CD4-positive, alpha-beta memory T cell (primary cell): ENCODE measurements at regions of chrX and their contacts with region 1.

Region 1: DNA sequence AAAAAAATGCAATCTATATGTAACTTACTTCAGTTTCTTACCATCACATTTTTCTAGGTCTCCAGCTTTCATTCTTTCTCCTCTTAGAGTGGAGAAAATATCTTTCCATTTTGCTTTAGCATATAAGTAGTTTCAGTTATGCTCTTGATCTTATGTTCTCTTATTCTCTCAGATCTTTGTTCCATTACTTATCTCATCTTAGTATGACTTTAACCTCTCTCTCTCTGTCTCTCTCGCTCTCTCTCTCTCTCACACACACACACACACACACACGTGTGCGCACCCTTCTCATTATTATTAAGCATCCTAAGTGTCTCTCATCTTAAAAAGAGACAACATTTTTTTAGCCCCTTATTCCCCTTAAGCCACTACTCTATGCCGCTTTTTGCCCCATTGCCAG is 92.8 kb downstream of the FAAH2 start:
- DNase-seq: no peak
- H3K4me3 ChIP-seq: no peak overlapping the region
- H3K4me3 Mint-ChIP-seq: no peak overlapping the region
- H3K27ac ChIP-seq: no peak overlapping the region
- H3K27ac Mint-ChIP-seq: peak overlapping the region in 3 of 7 donors; percentile 48 to 90 (median 82)
- H3K4me1 ChIP-seq: no peaks in the 10 kb centered on the region
- H3K4me1 Mint-ChIP-seq: peaks cover 0 to 8% (median 6%) of the 10 kb centered on the region in 4 donors
- H3K27me3 ChIP-seq: no peaks in the 10 kb centered on the region
- H3K27me3 Mint-ChIP-seq: no peaks in the 10 kb centered on the region

Region 2: DNA sequence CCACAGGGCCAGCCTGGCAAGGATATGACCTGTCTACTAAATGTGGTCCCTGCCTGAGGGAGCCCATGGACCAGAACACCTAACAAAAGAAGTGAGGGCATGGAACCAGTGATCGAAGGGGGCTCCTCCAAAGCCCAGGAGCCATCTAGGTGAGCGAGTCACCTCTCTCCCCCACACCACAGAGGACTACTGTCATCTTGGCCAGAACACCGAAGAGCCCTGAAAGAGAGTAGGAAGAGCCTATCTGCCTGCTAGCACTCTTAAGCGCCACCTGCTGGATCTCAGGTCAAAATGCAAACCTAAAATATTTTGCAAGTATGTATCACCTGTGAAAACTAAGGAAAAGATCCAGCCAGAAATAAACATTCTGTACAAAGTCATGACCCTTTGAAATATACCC is 74.6 kb after region 1 on chrX:
- CTCF ChIA-PET with region 1: no interaction called
- POLR2A ChIA-PET with region 1: no interaction called
- intact Hi-C with region 1: loop called (anchors 10 kb)
- DNase-seq: peak; percentile 25 to 36 (median 33)
- H3K4me3 ChIP-seq: no peak overlapping the region
- H3K4me3 Mint-ChIP-seq: no peak overlapping the region
- H3K27ac ChIP-seq: no peak overlapping the region
- H3K27ac Mint-ChIP-seq: peak overlapping the region in 2 of 7 donors; percentile 29 to 68
- H3K4me1 ChIP-seq: no peaks in the 10 kb centered on the region
- H3K4me1 Mint-ChIP-seq: peaks cover 0 to 2% (median 0%) of the 10 kb centered on the region in 4 donors
- H3K27me3 ChIP-seq: no peaks in the 10 kb centered on the region
- H3K27me3 Mint-ChIP-seq: no peaks in the 10 kb centered on the region

Region 3: DNA sequence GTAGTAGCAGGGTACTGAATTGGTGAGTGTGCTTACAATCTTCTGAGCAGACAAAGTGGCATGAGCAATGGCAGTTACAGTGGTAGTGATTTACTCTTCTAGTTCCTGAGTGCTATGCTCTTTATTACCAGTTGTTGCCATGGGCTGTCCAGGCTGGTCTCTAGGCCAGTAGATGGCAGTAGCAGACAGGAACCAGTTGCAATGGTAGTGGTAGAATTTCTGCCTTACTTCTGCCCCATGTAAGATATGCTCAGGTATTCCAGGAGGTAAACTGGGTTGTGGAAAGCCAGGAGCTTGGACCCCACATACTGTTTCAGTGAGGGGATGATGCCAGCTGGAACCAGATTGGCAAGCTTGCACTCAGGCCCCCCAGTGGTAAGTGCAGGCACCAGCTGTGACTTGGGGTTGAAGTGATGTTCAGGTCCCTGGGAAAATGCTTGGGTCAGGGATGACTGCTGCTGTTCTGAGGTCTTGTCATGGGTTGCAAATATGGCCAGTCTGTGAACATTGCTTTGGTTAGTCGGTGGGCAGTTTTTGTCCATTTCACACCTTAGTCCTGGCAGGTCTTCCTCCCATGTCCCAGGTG is 149.5 kb after region 1 on chrX:
- CTCF ChIA-PET with region 1: no interaction called
- POLR2A ChIA-PET with region 1: no interaction called
- intact Hi-C with region 1: no loop called
- DNase-seq: peak in 4 of 5 donors; percentile 4 to 14 (median 8)
- H3K4me3 ChIP-seq: no peak overlapping the region
- H3K4me3 Mint-ChIP-seq: no peak overlapping the region
- H3K27ac ChIP-seq: no peak overlapping the region
- H3K27ac Mint-ChIP-seq: no peak overlapping the region
- H3K4me1 ChIP-seq: no peaks in the 10 kb centered on the region
- H3K4me1 Mint-ChIP-seq: peaks cover 0 to 1% (median 0%) of the 10 kb centered on the region in 4 donors
- H3K27me3 ChIP-seq: no peaks in the 10 kb centered on the region
- H3K27me3 Mint-ChIP-seq: peaks cover 1% of the 10 kb centered on the region in 2 donors